Left colon (tissue), 2 donors: ENCODE measurements at regions of chr10 and their contacts with region 1.

Region 1: DNA sequence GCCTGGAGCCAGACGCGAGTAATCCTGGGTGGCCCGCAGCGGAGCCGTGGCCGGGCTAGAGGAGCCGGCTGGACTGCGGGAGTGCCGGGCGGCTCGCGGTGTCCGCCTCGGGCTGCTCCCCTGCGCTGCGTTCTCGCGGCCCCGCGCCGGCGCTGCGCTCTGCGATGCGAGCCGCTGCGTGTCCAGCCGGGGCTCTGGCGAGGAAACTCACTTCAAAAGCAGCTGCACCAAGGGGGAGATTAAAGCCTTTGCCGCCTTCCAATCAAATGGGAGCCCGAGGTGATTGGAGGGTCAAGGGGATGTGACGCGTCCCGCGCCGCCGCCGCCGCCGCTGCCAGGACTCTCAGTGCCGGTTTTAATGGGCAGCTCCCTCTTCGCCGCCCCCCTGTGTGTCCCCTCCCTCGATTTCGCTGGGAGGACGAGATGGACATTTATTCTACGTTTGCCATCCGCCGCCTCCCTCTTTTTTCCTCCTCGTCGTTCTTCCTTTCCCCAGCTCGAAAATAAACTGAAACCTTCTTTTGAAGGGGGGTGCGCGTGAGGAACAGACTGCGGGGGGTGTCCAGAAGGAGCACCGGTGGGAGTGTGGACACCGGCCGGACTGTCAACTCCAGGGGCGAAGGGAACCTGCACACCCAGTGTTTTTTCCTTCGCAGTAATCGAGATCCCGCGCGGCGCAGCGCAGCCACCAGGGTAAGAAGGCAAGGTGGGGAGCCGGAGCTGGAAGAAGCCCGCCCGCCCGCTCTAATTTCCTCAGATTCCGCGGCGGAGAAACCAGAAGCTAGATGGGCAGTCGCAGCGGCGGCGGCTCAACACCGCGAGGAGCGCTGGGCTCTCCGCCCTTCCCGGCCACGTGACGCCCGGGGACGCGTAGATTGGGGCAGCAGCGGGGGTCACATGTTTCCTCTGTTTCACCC is at the start of gene ZNF503:
- DNase-seq: peak; percentile 95 to 97
- ATAC-seq: peak; percentile 72
- total RNA-seq, gene ZNF503: 3.8 to 9.9 TPM

Region 2: GRCh38 chr10:75651417-75651816 is 249.6 kb after region 1 on chr10:
- intact Hi-C with region 1: loop called in 1 of 2 experiments (anchors 10 kb)
- DNase-seq: peak in 1 of 2 donors; percentile 39
- ATAC-seq: peak; percentile 87

Region 3: DNA sequence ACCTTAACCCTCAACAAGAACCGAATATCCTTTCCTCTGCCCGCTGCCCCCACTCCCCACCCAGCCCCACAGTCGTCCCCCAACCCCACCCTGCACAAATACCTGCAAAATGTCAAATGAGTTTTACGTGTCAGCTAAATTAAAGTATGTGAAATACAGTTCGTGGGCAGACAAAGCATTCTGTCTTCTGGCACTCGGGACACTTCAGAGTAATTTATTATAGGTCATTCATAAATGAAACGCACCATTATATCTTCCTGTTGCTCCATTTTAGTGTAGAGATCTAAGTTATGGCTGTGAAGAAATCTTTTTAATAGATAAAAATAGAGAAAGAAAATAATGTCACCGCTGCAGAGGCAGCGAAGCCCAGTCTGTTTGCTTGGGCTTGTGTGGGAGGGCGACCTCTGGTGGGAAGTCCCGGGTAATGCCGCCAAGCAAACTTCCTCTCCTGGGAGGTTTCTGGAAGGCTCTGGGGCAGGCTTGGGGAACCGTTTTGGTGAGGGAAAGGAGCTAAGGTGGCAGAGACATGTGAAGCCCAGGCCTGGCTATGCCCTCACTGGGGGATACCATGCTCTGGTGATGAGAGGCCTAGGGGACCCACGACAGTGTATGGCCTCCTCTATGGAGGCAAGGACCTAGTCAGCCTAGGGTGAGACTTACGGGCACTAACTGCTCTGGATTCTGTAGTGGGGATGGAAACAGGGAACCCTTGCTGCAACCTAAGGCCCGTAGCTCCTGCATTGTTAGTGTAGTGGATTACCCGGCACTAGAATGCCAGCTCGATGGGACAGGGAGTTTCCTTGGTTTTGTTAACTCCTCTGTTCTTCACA is 634.5 kb after region 1 on chr10:
- intact Hi-C with region 1: loop called in 1 of 2 experiments (anchors 5 kb)
- DNase-seq: peak; percentile 54 to 69
- ATAC-seq: peak; percentile 81